ENCODE measurements at regions of chr1 and their contacts with region 1.

Region 1: GRCh38 chr1:97630948-97631347 is 289.9 kb downstream of the DPYD start:
- DNase-seq: no peak
- H3K4me3 Mint-ChIP-seq: no peak overlapping the region
- H3K27ac Mint-ChIP-seq: no peak overlapping the region
- H3K4me1 Mint-ChIP-seq: no peaks in the 10 kb centered on the region
- H3K27me3 Mint-ChIP-seq: no peaks in the 10 kb centered on the region
- CTCF ChIP-seq: no peak

Region 2: GRCh38 chr1:97647776-97648175 is 16.8 kb after region 1 on chr1:
- CTCF ChIA-PET with region 1: no interaction called
- intact Hi-C with region 1: no loop called
- DNase-seq: no peak
- H3K4me3 Mint-ChIP-seq: no peak overlapping the region
- H3K27ac Mint-ChIP-seq: no peak overlapping the region
- H3K4me1 Mint-ChIP-seq: no peaks in the 10 kb centered on the region
- H3K27me3 Mint-ChIP-seq: no peaks in the 10 kb centered on the region
- CTCF ChIP-seq: no peak

Region 3: DNA sequence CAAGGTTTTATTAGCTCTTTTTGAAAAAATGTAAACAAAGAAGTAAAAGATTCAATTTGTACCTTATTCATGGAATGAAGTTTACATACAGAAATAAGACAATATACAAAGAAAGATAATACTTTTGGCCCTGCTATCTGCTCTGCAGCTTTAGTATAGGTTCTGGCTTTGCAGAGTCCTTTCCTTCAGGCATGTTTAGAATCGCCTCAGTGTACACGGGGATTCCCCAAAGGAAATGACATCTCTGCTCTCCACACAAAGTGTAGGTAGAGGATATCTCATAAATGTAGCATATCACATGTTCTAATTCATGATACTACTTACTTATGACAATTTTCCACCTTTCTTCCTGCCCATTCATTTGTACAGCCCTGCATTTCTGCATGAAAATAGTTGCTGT is 512.5 kb after region 1 on chr1:
- CTCF ChIA-PET with region 1: no interaction called
- intact Hi-C with region 1: no loop called
- DNase-seq: no peak
- H3K4me3 Mint-ChIP-seq: no peak overlapping the region
- H3K27ac Mint-ChIP-seq: no peak overlapping the region
- H3K4me1 Mint-ChIP-seq: no peaks in the 10 kb centered on the region
- H3K27me3 Mint-ChIP-seq: no peaks in the 10 kb centered on the region
- CTCF ChIP-seq: no peak

Region 4: GRCh38 chr1:98384461-98385141 is 753.7 kb after region 1 on chr1:
- CTCF ChIA-PET with region 1: interaction called, 13 read pairs
- intact Hi-C with region 1: no loop called
- DNase-seq: no peak
- H3K4me3 Mint-ChIP-seq: no peak overlapping the region
- H3K27ac Mint-ChIP-seq: no peak overlapping the region
- H3K4me1 Mint-ChIP-seq: peaks cover 20% of the 10 kb centered on the region
- H3K27me3 Mint-ChIP-seq: no peaks in the 10 kb centered on the region
- CTCF ChIP-seq: no peak

Measured in Calu3 (cell line).